Dorsolateral prefrontal cortex (tissue), 120 donors: ENCODE measurements at regions of chr1 and their contacts with region 1.

Region 1: DNA sequence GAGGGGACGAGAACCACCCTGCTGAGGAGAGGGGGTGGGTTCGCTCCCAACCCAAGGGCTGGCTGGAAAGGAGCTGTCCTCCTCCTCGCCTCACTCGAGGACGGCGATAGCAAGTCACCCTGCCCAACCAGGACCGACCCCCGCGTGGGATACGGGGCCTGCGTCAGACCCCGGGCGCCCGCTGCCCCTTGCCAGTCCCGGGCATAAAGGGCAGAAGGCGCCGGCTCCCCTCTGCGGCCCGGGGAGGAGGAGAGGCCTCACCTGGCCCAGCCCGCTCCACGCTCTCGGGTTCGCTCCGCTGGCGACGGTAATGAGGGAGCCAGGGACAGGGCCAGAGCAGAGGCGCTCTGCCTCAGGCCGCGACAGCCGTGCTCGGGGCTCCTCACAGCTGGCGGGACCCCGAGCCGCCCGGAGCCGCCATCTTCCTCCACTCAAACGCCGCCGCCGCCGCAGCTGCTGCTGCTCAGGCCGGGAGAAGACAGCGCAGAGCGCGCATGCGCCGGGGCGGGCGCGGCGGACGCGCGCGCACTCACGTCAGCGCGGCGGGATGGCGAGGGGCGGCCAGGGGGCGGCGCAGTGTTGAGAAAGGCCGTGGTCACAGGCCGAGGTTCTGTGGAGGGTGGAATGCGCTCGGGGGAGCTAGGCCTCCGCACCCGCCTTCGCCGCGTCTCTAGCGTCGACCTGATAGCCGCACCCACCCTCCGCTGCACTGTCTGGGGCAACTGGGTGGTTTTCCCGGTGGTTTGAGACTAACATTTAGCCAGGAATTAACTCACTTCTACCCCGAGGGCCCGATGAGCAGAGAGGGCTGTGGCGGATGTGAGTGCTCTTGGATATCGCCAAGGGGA is at the start of gene FBXO42:
- DNase-seq: peak; percentile 73 to 94 (median 86)
- H3K4me3 ChIP-seq: peak within 1 kb of the TSS; percentile 62 to 100 (median 95)
- H3K27ac ChIP-seq: peak within 1 kb of the TSS; percentile 60 to 98 (median 91)
- H3K27me3 ChIP-seq: no peaks in the 10 kb centered on the region
- CTCF ChIP-seq: peak in 55 of 56 donors; percentile 24 to 80 (median 61)
- total RNA-seq, gene FBXO42: 19.4 to 43.5 (median 31.1) TPM

Region 2: DNA sequence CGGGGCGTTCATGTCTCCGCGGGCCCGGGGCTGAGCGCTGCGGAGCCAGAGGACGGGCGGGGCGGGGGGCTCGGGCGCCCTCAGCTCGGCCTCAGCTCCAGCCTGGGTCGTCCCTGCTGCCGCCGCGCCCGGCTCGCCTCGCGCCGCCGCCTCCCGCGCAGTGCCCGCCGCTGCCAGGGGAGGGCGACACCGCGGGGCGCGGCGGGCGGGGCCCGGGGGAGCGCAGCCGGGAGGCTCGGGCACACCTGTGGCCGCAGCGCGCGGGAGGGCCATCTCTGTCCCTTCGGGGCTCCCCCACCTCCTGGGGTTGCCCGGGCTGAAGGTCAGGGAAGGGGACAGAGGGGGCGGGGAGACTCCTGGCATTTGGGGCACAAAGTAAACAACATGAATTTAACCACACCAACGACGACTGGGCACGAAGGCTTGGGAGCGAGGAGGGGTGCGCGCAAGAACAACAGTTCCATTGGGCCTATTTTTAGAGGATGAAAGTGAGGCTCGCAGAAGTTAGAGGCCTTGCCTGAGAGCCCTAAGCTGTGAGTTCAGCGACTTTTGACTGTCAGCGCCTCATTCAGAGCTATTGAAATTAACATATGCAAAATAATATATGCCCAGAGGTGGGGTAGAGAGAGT is 278.6 kb before region 1 on chr1 and contains the start of gene FAM131C:
- intact Hi-C with region 1: loop called in 1 of 2 experiments (anchors 5 kb)
- DNase-seq: peak in 3 of 10 donors; percentile 26 to 64 (median 61)
- H3K4me3 ChIP-seq: peak within 1 kb of the TSS; percentile 44 to 74 (median 60)
- H3K27ac ChIP-seq: peak within 1 kb of the TSS in 36 of 59 donors; percentile 11 to 90 (median 60)
- H3K27me3 ChIP-seq: no peaks in the 10 kb centered on the region
- CTCF ChIP-seq: peak in 26 of 56 donors; percentile 8 to 65 (median 33)
- total RNA-seq, gene FAM131C: 2.2 to 15.3 (median 7.6) TPM

Region 3: DNA sequence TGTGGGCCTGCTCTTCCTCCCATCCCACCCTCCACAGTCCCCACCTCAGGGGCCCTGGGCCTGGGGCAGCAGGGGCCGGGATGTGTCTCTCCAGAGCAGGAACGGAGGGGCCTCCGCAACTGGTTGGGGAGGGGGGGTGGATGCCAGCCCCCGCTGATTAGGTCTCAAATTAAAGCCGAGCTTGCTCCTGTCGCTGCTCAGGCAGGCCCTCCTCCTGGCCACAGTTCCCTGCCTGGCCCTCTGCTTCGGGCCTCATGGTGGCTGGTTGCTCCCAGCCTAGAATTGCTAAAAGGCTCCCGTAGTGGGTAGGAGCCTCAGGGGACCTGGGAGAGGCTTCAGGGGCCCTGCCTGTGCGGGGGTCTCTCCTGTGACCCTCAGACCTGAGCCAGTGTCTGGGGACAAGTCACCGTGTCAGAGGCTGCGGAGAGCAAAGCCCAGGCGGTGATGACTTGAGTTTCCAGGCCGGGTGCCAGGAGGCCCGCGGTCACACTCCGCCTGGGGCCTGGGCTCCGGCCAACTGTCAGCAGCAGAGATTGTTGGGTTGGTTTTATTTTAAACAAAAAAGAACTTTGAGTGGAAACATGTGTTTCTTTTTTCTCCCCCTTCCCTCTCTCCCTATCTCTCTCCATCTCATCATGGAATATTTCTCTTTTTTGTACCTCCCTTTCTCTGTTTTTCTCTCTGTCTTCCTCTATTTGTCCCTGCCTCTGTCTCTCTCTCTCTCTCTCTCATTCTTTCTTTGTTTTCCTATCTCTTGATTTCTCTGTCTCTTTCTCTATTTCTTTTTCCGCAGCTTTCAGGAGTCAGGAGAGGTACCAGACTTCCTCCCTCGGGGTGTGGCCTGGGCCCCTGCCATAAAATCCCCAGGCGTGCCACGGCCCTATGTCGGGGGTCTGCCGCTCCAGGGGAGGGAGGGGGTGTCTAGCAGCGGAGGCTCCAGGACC is 176.3 kb before region 1 on chr1:
- intact Hi-C with region 1: no loop called
- DNase-seq: peak; percentile 44 to 84 (median 70)
- H3K4me3 ChIP-seq: peak overlapping the region in 5 of 59 donors; percentile 7 to 31 (median 14)
- H3K27ac ChIP-seq: peak overlapping the region in 56 of 59 donors; percentile 4 to 87 (median 71)
- H3K27me3 ChIP-seq: peaks cover 0 to 3% (median 0%) of the 10 kb centered on the region in 45 donors
- CTCF ChIP-seq: no peak

Region 4: GRCh38 chr1:16206547-16207317 is 145.5 kb before region 1 on chr1:
- intact Hi-C with region 1: loop called in 1 of 2 experiments (anchors 10 kb)
- DNase-seq: peak; percentile 79 to 94 (median 88)
- H3K4me3 ChIP-seq: peak overlapping the region; percentile 23 to 71 (median 55)
- H3K27ac ChIP-seq: peak overlapping the region in 47 of 59 donors; percentile 10 to 88 (median 65)
- H3K27me3 ChIP-seq: peaks cover 0 to 12% (median 0%) of the 10 kb centered on the region in 45 donors
- CTCF ChIP-seq: no peak

Region 5: DNA sequence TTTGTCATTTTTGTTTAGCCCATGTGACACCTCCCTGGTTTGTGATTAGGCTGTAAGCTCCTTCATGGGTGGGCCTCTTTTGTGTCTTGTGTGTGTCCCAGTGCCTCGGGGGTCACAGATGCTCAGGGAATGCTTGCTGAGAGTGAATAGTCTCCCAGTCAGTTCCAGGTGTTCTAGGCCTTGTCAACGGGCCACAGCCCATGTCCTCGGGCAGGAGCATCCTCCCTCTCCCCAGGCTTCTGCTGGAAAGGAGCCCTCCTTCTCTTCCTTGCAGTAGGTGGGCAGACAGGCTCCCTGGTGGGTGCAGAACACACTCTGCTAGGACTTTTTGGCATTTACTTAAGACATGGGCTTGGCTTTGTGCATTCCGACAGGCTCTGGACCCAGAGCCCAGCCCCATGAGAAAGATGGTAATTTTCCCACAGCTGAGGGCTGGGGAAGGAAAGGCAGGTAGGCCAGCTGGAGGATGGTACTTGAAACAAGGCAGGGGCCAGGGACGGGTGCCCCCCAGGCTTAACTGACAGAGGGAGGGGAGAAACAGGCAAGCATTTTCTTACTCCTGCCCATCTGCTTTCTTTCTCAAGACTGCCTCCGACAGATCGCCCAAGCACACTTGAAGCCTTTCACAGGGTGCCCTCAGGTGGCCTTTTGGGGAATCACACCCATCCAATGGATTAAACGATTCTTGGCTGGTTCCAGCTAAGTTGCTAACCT is 108.1 kb before region 1 on chr1:
- intact Hi-C with region 1: loop called in 1 of 2 experiments (anchors 5 kb)
- DNase-seq: peak; percentile 51 to 85 (median 75)
- H3K4me3 ChIP-seq: no peak overlapping the region
- H3K27ac ChIP-seq: peak overlapping the region in 38 of 59 donors; percentile 2 to 75 (median 46)
- H3K27me3 ChIP-seq: no peaks in the 10 kb centered on the region
- CTCF ChIP-seq: peak; percentile 55 to 89 (median 82)